ENCODE measurements at regions of chr5 and their contacts with region 1.

Region 1: DNA sequence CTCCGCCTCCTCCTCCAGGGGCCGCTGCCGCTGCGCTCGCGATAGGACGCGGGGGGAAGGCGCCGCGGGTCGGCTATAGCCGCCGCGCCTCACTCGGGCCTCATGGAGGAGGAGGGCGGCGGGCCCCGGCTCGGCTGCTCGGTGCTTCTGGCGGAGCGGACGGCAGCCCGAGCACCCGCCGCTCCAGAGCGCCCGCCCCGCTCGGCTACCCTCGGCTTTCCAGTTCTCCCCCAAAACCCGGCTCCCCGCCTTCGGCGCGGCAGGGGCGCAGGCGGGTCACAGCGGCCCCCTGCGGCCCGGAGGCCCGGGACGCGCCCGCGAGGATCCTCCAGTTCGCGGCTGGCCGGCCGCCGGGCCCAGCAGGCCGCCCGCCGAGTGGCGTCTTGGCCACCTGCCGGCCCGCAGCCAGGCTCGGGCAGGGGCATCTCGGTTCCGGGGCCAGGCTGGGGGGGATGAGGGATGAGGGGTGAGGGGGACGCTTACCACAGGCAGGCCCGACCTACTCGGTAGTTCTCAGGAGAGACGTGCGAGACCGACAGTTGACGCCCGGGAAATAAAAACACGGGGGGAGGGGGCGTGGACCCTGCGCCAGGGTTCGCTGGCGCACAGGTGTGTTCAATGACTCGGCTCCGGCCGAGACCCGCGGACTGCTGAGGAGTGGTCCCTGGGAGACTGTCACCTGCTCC is at the start of gene PAIP1:
- ATAC-seq: peak; percentile 60 to 90 (median 86)
- H3K4me3 ChIP-seq: peak within 1 kb of the TSS; percentile 76 to 99 (median 88)
- H3K27ac ChIP-seq: peak within 1 kb of the TSS; percentile 94 to 97
- H3K4me1 ChIP-seq: peaks cover 16 to 28% of the 10 kb centered on the region in 2 donors
- total RNA-seq, gene PAIP1: 74.4 to 126 (median 88.0) TPM

Region 2: GRCh38 chr5:43602461-43603343 is 45.7 kb after region 1 on chr5 and contains the start of gene NNT:
- in situ Hi-C with region 1: loop called in 1 of 9 experiments (anchors 10 kb)
- ATAC-seq: peak; percentile 70 to 88 (median 84)
- H3K4me3 ChIP-seq: peak within 1 kb of the TSS; percentile 60 to 80 (median 73)
- H3K27ac ChIP-seq: peak within 1 kb of the TSS; percentile 51 to 76
- H3K4me1 ChIP-seq: peaks cover 12 to 17% of the 10 kb centered on the region in 2 donors
- total RNA-seq, gene NNT: 37.0 to 112 (median 50.4) TPM